GM12878 (cell line): ENCODE measurements at regions of chr3 and their contacts with region 1.

Region 1: GRCh38 chr3:53513556-53514190 is 19.3 kb downstream of the CACNA1D start:
- DNase-seq: no peak
- ATAC-seq: peak; percentile 94
- H3K4me3 ChIP-seq: no peak overlapping the region
- H3K27ac ChIP-seq: no peak overlapping the region
- H3K4me1 ChIP-seq: no peaks in the 10 kb centered on the region
- H3K27me3 ChIP-seq: peaks cover 0 to 6% of the 10 kb centered on the region in 2 experiments; a peak in 3 of 4 replicates
- CTCF ChIP-seq: peak; percentile 25 to 57 (median 39); a peak in 4 of 6 replicates
- EP300 ChIP-seq: no peak
- POLR2A ChIP-seq: no peak
- RAD21 ChIP-seq: peak; percentile 19; the same call in 1 of the 2 replicates

Region 2: DNA sequence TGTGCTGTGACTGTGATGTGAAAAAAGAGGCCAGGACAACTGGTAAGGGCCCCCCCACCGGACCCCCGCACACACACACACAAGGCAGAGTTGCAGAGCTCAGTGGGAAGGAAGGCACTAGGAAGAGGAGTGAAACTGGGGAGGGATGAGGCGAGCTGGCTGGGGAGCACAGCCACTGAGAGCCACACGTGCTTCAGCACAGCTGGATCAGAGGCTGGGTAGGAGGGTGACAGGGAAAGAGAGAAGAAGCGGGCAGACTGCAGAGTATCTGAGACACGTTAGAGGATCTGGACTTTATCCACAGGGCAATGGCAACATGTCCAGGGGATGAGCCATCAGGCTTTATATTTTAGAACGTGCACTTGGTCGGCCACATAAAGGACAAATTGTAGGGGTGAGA is 219.8 kb before region 1 on chr3:
- CTCF ChIA-PET with region 1: interaction called, 3 read pairs
- POLR2A ChIA-PET with region 1: interaction called, 3 read pairs
- RAD21 ChIA-PET with region 1: no interaction called
- SMC1A ChIA-PET with region 1: no interaction called
- in situ Hi-C with region 1: no loop called
- intact Hi-C with region 1: loop called (anchors 10 kb)
- DNase-seq: no peak
- ATAC-seq: no peak
- H3K4me3 ChIP-seq: no peak overlapping the region
- H3K27ac ChIP-seq: no peak overlapping the region
- H3K4me1 ChIP-seq: no peaks in the 10 kb centered on the region
- H3K27me3 ChIP-seq: no peaks in the 10 kb centered on the region
- CTCF ChIP-seq: no peak
- EP300 ChIP-seq: no peak
- POLR2A ChIP-seq: no peak
- RAD21 ChIP-seq: no peak

Region 3: GRCh38 chr3:53525765-53526703 is 12.4 kb after region 1 on chr3:
- CTCF ChIA-PET with region 1: interaction called, 7 read pairs
- POLR2A ChIA-PET with region 1: no interaction called
- RAD21 ChIA-PET with region 1: no interaction called
- SMC1A ChIA-PET with region 1: interaction called, 13 read pairs
- in situ Hi-C with region 1: no loop called
- intact Hi-C with region 1: no loop called
- DNase-seq: no peak
- ATAC-seq: no peak
- H3K4me3 ChIP-seq: no peak overlapping the region
- H3K27ac ChIP-seq: no peak overlapping the region
- H3K4me1 ChIP-seq: no peaks in the 10 kb centered on the region
- H3K27me3 ChIP-seq: no peaks in the 10 kb centered on the region; a peak in 2 of 4 replicates
- CTCF ChIP-seq: no peak
- EP300 ChIP-seq: no peak
- POLR2A ChIP-seq: no peak
- RAD21 ChIP-seq: no peak